ENCODE measurements at regions of chr4 and their contacts with region 1.

Region 1: GRCh38 chr4:159142241-159142640 is 39.4 kb downstream of the RAPGEF2 start:
- DNase-seq: no peak
- H3K4me3 Mint-ChIP-seq: no peak overlapping the region
- H3K27ac Mint-ChIP-seq: no peak overlapping the region
- H3K4me1 Mint-ChIP-seq: peaks cover 15% of the 10 kb centered on the region
- H3K27me3 Mint-ChIP-seq: no peaks in the 10 kb centered on the region

Region 2: DNA sequence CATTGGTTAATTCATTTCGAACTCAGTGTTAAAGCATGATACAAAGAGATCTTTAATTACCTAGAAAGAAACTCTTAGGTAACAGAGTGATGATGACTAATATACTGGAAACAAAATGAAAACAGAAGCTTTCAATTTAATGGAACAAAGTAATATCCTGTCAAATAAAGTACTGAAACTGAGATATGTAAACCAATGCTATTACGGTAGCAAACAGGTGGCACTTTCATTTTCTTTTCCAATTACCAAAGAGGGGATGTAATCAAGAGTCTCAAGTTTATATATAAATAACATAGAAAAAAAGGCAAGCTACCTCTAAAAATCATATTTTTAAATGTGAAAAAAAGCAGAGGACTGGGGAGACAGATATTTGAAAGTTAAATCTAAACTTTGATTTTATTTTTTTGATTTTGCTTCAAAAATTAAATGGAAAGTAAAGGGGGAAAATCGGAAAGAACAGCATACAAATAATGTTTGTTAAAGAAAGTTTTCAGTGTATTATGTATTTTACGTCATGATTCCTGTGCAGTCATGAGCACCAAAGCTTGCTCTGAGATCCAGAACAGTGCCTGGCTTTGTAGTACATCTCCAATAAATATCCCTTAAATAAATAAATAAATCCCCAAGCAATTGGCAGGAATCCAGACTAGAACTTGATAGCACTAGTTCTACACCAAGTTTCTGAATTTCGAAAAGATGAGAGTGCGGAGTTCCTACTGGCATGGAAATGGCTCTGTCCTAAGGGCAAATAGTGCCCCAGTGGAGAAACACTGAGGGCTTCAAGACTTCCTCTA is 64.3 kb before region 1 on chr4:
- intact Hi-C with region 1: no loop called
- DNase-seq: no peak
- H3K4me3 Mint-ChIP-seq: peak overlapping the region; percentile 53
- H3K27ac Mint-ChIP-seq: peak overlapping the region; percentile 22
- H3K4me1 Mint-ChIP-seq: peaks cover 24% of the 10 kb centered on the region
- H3K27me3 Mint-ChIP-seq: peaks cover 2% of the 10 kb centered on the region

Region 3: GRCh38 chr4:159097785-159098184 is 44.5 kb before region 1 on chr4:
- intact Hi-C with region 1: loop called (anchors 5 kb)
- DNase-seq: no peak
- H3K4me3 Mint-ChIP-seq: no peak overlapping the region
- H3K27ac Mint-ChIP-seq: no peak overlapping the region
- H3K4me1 Mint-ChIP-seq: peaks cover 26% of the 10 kb centered on the region
- H3K27me3 Mint-ChIP-seq: peaks cover 9% of the 10 kb centered on the region

Region 4: DNA sequence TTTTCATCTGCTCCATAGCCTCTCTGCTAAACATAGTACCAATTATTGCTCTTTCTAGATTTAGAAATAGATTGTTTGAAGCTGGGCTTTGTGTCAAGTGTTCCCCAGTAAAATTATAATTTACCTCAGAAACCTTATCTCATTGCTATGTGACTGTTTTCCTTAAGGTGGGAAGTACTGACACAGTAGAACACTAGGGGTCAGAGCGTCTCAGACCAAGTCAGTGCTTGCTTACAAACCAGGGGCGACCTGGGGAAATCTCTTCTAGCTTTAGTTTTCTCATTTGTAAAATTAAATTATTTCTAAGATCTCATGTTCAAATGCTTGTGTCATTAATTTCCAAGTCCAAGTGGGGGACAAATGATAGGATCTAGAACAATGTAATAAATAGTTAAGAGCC is 321.0 kb after region 1 on chr4:
- intact Hi-C with region 1: no loop called
- DNase-seq: no peak
- H3K4me3 Mint-ChIP-seq: no peak overlapping the region
- H3K27ac Mint-ChIP-seq: no peak overlapping the region
- H3K4me1 Mint-ChIP-seq: no peaks in the 10 kb centered on the region
- H3K27me3 Mint-ChIP-seq: no peaks in the 10 kb centered on the region